Mammary epithelial cell (primary cell): ENCODE measurements at regions of chr6 and their contacts with region 1.

Region 1: DNA sequence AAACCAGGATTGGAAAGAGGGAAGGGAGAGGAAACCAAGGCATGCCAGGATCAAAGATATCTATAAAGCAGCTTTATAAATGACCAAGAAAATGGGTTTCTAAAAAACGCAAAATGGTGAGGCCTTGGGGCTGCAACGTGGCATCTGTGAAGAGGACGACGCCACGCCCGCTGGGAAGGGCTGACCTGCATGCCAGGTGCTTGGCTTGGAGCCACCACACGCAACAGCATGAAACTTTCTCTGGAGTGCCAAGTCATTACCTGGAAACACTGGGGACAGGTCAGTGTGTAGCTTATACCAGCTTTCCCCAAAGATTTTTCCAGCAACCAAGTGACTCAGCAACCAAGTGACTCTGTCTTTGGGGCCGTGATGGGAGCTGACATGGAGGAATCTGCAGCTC is 82.5 kb downstream of the POPDC3 start:
- DNase-seq: peak; percentile 7
- H3K4me3 ChIP-seq: no peak overlapping the region
- H3K27ac ChIP-seq: no peak overlapping the region
- H3K4me1 ChIP-seq: no peaks in the 10 kb centered on the region
- H3K27me3 ChIP-seq: no peaks in the 10 kb centered on the region
- CTCF ChIP-seq: no peak

Region 2: GRCh38 chr6:105263685-105264610 is 166.7 kb after region 1 on chr6:
- CTCF ChIA-PET with region 1: interaction called, 3 read pairs
- dilution Hi-C with region 1: no loop called
- in situ Hi-C with region 1: loop called in 1 of 2 experiments (anchors 10 kb)
- intact Hi-C with region 1: no loop called
- DNase-seq: no peak
- H3K4me3 ChIP-seq: no peak overlapping the region
- H3K27ac ChIP-seq: no peak overlapping the region
- H3K4me1 ChIP-seq: no peaks in the 10 kb centered on the region
- H3K27me3 ChIP-seq: no peaks in the 10 kb centered on the region
- CTCF ChIP-seq: no peak

Region 3: GRCh38 chr6:105409734-105410133 is 312.4 kb after region 1 on chr6:
- CTCF ChIA-PET with region 1: no interaction called
- dilution Hi-C with region 1: loop called (anchors 25 kb)
- in situ Hi-C with region 1: loop called (anchors 5 to 10 kb)
- intact Hi-C with region 1: no loop called
- DNase-seq: no peak
- H3K4me3 ChIP-seq: no peak overlapping the region
- H3K27ac ChIP-seq: no peak overlapping the region
- H3K4me1 ChIP-seq: no peaks in the 10 kb centered on the region
- H3K27me3 ChIP-seq: no peaks in the 10 kb centered on the region
- CTCF ChIP-seq: no peak